ENCODE measurements at regions of chr4 and their contacts with region 1.

Region 1: DNA sequence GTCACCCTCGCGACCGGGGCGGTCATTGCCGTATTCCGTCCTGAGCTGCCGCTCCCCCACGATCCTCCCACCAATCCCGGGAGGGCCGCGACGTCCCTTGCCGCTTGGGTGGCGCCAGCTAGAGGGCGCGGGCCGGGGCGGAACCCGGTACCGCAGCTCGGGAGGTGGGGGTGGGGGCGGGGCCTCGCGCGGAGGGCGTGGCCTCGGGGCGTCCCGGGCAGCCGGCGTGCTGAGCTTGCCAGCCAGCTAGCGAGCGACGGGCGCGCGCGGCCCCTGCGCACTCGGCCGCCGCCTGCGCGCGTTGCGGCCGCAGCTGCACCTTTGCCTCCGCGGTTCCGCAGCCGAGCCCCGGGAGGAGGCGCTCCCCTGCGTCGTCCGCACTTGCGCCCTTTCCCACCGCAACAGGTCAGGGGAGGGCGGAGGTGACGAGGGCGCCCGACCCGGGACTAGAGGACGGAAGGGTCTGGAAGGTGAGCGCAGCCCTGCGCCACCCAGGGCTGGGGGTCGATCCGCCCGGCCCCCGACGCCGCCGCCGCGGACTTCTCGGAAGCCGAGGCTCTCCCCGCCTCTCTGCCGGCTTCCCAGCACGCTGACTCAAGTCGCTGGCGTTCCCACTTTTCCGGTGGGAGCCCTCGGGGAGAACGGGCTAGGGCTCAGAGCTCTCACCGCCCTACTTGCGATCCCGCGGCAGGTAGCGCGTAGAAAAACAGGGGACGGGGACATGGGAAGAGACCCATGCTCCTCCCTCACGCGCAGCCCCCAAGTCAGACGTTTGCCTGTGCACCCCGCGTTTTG is at the start of gene AFF1:
- DNase-seq: peak; percentile 91
- H3K4me3 Mint-ChIP-seq: peak within 1 kb of the TSS; percentile 83
- H3K27ac Mint-ChIP-seq: peak within 1 kb of the TSS; percentile 95
- H3K4me1 Mint-ChIP-seq: peaks cover 48% of the 10 kb centered on the region
- H3K27me3 Mint-ChIP-seq: no peaks in the 10 kb centered on the region
- total RNA-seq, gene AFF1: 68.8 to 72.0 TPM

Region 2: DNA sequence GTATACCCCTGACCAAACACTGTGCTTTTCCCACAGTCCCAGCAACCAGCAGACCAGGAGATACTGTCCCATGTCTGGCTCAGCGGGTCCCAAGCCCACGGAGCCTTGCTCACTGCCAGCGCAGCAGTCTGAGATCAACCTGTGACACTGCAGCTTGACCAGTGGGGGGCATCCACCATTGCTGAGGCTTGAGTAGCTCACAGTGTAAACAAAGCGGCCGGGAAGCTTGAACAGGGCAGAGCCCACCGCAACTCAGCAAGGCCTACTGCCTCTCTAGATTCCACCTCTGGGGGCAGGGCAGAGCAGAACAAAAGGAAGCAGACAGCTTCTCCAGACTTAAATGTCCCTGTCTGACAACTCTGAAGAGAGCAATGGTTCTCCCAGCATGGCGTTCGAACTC is 143.8 kb before region 1 on chr4:
- CTCF ChIA-PET with region 1: no interaction called
- POLR2A ChIA-PET with region 1: no interaction called
- DNase-seq: no peak
- H3K4me3 Mint-ChIP-seq: no peak overlapping the region
- H3K27ac Mint-ChIP-seq: no peak overlapping the region
- H3K4me1 Mint-ChIP-seq: no peaks in the 10 kb centered on the region
- H3K27me3 Mint-ChIP-seq: peaks cover 1% of the 10 kb centered on the region

Region 3: DNA sequence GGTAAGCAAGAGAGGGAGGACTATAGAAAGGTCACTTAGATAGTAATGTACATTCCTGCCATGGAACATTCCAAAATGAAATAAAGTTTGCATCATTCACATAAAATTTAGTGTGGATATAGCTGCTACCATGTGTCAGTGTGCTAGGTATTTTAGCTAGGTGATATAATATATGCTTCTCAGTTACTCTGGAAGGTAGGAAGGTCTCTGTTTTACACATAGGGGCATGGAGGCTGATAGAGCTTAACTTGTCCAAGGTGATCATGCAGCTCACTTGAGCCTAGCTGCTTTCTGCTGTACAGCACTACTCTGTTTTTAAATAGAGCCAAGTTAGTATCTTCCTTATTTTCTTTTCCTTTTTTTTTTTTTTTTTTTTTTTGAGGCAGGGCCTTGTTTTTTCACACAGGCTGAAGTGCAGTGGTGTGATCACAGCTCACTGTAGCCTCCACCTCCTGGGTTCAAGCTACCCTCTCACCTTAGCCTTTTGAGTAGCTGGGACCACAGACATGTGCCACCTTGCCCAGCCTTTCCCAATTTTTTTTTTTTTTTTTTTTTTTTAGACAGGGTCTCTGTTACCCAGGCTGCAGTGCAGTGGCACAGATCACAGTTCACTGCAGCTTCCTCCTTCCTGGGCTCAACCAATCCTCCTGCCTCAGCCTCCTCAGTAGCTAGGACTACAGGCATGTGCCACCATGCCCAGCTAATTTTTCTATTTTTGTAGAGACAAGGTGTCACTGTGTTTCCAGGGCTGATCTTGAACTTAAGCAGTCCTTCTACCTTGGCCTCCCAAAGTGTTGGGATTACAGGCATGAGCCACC is 10.2 kb after region 1 on chr4:
- CTCF ChIA-PET with region 1: interaction called, 6 read pairs
- POLR2A ChIA-PET with region 1: interaction called, 21 read pairs
- DNase-seq: no peak
- H3K4me3 Mint-ChIP-seq: no peak overlapping the region
- H3K27ac Mint-ChIP-seq: no peak overlapping the region
- H3K4me1 Mint-ChIP-seq: peaks cover 31% of the 10 kb centered on the region
- H3K27me3 Mint-ChIP-seq: no peaks in the 10 kb centered on the region

Region 4: GRCh38 chr4:86977621-86978184 is 42.7 kb after region 1 on chr4:
- CTCF ChIA-PET with region 1: interaction called, 4 read pairs
- POLR2A ChIA-PET with region 1: interaction called, 11 read pairs
- DNase-seq: peak; percentile 21
- H3K4me3 Mint-ChIP-seq: no peak overlapping the region
- H3K27ac Mint-ChIP-seq: no peak overlapping the region
- H3K4me1 Mint-ChIP-seq: peaks cover 49% of the 10 kb centered on the region
- H3K27me3 Mint-ChIP-seq: no peaks in the 10 kb centered on the region

Region 5: DNA sequence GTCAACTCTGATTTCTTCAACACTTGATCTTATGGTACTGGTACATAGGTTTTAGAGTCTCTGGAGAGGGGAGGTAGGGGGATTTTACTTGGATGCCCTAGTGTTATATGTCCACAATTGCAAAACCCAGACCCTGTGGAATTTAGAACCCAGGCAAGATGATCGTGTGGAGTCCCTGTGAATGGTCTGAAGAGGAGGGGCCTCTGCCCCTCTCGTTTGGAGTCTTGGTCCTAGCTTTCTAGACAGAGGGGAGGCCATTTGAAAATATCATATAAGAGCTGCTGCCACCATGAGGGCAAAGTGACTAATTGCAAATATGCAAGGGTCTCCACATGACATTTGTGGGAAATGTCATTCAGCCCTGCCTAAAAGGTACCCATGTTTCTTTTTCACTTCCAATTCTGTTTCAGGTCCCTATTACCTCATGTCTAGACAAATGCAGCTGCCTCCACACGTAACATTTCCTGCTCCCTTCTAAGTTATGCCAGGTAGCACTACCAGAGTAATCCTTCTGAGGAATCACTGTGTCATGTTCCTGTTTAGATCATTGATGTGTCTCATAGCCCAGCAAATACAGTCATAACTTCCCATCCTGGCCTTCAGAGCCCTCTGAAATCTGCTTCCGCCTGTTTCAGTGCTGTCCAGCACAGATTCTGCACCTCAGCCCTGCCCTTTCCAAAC is 158.6 kb after region 1 on chr4:
- CTCF ChIA-PET with region 1: interaction called, 28 read pairs
- POLR2A ChIA-PET with region 1: interaction called, 5 read pairs
- DNase-seq: peak; percentile 29
- H3K4me3 Mint-ChIP-seq: no peak overlapping the region
- H3K27ac Mint-ChIP-seq: no peak overlapping the region
- H3K4me1 Mint-ChIP-seq: peaks cover 18% of the 10 kb centered on the region
- H3K27me3 Mint-ChIP-seq: no peaks in the 10 kb centered on the region

Region 6: GRCh38 chr4:87220094-87220822 is 285.3 kb after region 1 on chr4 and contains the start of gene KLHL8:
- CTCF ChIA-PET with region 1: interaction called, 11 read pairs
- POLR2A ChIA-PET with region 1: interaction called, 27 read pairs
- DNase-seq: peak; percentile 90
- H3K4me3 Mint-ChIP-seq: peak within 1 kb of the TSS; percentile 85
- H3K27ac Mint-ChIP-seq: peak within 1 kb of the TSS; percentile 85
- H3K4me1 Mint-ChIP-seq: peaks cover 16% of the 10 kb centered on the region
- H3K27me3 Mint-ChIP-seq: peaks cover 3% of the 10 kb centered on the region
- total RNA-seq, gene KLHL8: 9.1 to 9.8 TPM

Measured in activated CD4-positive, alpha-beta memory T cell treated with anti-CD3 and anti-CD28 coated beads, Interleukin-2, amount 10 ng/mL, durations not matched to agents 7 days and 5 days (primary cell).